ENCODE measurements at regions of chr1 and their contacts with region 1.

Region 1: DNA sequence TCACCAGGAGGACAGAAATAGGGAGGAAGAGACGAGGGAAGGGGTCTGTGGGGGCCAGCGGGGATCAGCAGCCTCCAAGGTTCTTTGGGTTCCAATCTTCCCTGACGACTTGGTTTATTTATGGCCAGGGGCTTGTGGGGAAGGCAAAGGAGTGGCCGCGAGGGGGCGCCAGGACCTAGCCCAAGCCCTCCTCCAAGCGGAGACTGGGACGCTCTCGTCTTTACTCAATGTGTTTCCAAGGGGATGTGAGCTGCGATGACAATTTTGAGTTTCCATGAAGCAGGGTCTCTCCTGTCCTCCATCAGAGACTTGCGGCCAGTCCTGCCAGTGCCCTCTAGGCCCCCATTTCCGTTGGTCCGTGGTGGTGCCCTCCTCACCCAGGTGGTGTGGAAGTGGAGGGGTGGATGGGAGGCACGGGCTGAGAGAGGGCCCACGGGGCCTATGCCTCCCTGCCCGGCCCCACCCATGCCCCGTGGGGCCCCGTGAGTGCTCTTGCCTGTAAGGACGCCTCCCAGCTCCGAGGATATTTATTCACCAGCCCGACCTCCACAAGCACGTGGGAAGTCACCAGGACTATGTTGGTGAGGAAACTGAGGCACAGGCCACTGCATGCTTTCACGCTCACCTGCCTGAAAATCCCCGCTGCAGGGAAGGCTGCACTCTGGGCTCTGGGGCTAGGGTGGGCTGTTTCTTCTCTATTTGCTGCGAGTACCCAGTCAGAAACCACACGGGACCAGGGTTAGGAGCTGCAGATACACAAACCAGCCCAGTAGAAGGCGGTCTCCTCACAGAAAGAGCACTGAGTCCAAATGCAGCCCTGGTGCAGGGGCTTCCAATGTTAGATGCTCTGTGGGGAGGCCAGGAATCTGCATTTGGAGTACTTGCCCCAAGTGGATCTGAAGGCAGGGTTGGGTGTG is 26.5 kb downstream of the DMRTB1 start:
- DNase-seq: peak; percentile 71
- H3K4me3 ChIP-seq: no peak overlapping the region
- H3K27ac ChIP-seq: no peak overlapping the region
- H3K4me1 ChIP-seq: no peaks in the 10 kb centered on the region
- H3K27me3 ChIP-seq: no peaks in the 10 kb centered on the region
- CTCF ChIP-seq: peak; percentile 76

Region 2: DNA sequence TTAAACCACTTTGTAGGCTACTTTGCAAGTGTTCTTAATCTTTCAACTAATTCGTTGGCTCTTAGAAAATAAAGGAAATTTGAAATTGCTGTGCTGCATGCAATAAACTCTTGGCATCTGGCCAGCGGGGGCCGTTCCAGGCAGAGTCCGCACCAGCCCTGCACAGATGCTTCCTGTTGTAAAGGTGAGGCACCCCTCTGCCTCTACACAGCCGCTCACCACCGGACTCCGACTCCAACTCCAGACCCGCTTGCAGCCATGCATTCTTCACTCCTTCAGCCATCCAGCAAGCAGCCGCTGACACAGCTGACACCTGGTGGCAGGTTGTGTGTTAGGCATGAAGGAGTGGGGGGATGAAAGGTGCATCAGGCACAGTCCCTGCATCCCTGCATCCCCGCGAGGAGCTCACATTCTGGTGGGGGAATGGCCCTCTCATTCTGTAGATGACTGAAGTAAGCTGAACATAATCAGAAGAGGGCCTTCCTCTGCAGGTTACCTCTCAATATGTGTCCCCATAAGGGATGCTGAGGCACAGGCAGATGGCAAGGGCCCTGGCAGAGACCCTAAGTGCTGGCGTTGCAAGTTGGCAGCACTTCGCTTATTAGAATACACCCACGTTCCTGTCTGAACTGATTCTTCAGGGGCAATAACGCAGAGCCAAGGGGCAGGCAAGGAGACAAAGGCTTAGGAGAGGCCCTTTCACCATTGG is 196.4 kb after region 1 on chr1:
- CTCF ChIA-PET with region 1: no interaction called
- POLR2A ChIA-PET with region 1: no interaction called
- intact Hi-C with region 1: loop called (anchors 5 kb)
- DNase-seq: peak; percentile 12
- H3K4me3 ChIP-seq: no peak overlapping the region
- H3K27ac ChIP-seq: no peak overlapping the region
- H3K4me1 ChIP-seq: peaks cover 13% of the 10 kb centered on the region
- H3K27me3 ChIP-seq: peaks cover 5% of the 10 kb centered on the region
- CTCF ChIP-seq: peak; percentile 43

Region 3: GRCh38 chr1:53754484-53755312 is 269.0 kb after region 1 on chr1:
- CTCF ChIA-PET with region 1: interaction called, 3 read pairs
- POLR2A ChIA-PET with region 1: no interaction called
- intact Hi-C with region 1: loop called (anchors 2 kb)
- DNase-seq: peak; percentile 47
- H3K4me3 ChIP-seq: no peak overlapping the region
- H3K27ac ChIP-seq: no peak overlapping the region
- H3K4me1 ChIP-seq: no peaks in the 10 kb centered on the region
- H3K27me3 ChIP-seq: no peaks in the 10 kb centered on the region
- CTCF ChIP-seq: peak; percentile 60